H1 (cell line): ENCODE measurements at regions of chr1 and their contacts with region 1.

Region 1: GRCh38 chr1:156948708-156949107 is 28.3 kb downstream of the LRRC71 start:
- DNase-seq: no peak
- H3K4me3 ChIP-seq: no peak overlapping the region
- H3K27ac ChIP-seq: no peak overlapping the region
- H3K4me1 ChIP-seq: no peaks in the 10 kb centered on the region
- H3K27me3 ChIP-seq: no peaks in the 10 kb centered on the region
- CTCF ChIP-seq: peak; percentile 34 to 81 (median 80); a peak in 3 of 4 replicates
- EP300 ChIP-seq: no peak
- POLR2A ChIP-seq: no peak
- RAD21 ChIP-seq: peak; percentile 19 to 39; a peak in 2 of 4 replicates

Region 2: DNA sequence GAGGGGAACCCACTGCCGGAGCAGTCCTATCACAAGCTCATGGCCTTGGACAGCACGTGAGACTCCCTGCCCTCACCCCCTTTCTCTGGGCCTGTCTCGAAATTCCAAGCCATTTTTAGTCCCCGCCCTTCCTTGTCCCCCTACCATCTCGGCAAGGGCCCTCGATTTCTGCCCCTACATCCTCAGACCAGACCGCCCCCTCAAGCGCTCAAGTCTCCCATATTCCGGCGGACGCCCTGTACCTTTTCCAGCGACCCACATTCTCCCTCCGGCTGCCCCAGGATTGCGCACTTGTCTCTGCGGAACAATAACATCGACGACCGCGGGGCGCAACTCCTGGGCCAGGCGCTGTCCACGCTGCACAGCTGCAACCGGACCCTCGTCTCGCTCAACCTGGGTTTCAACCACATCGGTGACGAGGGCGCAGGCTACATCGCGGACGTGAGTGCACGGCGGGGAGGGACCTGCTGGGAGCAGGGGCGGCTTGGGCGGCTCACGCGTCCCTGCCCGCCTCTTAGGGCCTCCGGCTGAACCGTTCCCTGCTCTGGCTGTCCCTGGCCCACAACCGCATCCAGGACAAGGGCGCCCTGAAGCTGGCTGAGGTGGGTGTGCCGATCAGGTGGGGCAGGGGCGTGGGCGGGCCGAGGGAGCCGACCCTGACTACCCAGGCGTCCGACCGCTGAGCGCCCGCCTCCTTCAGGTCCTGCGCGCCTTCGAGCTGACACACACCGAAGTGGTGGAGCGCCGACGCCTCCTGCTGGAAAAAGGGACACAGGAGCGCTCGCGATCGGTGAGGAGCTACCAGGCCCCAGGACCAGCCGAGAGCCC is 21.3 kb before region 1 on chr1:
- CTCF ChIA-PET with region 1: interaction called, 25 read pairs
- POLR2A ChIA-PET with region 1: interaction called, 3 read pairs
- DNase-seq: peak in 1 of 2 experiments; percentile 90
- H3K4me3 ChIP-seq: peak overlapping the region; percentile 36 to 70 (median 62)
- H3K27ac ChIP-seq: no peak overlapping the region
- H3K4me1 ChIP-seq: peaks cover 3 to 21% (median 9%) of the 10 kb centered on the region in 4 experiments; a peak in 6 of 7 replicates
- H3K27me3 ChIP-seq: peaks cover 51 to 71% (median 69%) of the 10 kb centered on the region in 4 experiments
- CTCF ChIP-seq: peak; percentile 90 to 92 (median 92)
- EP300 ChIP-seq: no peak
- POLR2A ChIP-seq: no peak
- RAD21 ChIP-seq: peak; percentile 88 to 93

Region 3: GRCh38 chr1:156936721-156937220 is 11.9 kb before region 1 on chr1:
- CTCF ChIA-PET with region 1: interaction called, 25 read pairs
- POLR2A ChIA-PET with region 1: interaction called, 3 read pairs
- DNase-seq: no peak
- H3K4me3 ChIP-seq: no peak overlapping the region
- H3K27ac ChIP-seq: no peak overlapping the region
- H3K4me1 ChIP-seq: peaks cover 0 to 4% (median 0%) of the 10 kb centered on the region in 4 experiments; a peak in 3 of 7 replicates
- H3K27me3 ChIP-seq: no peaks in the 10 kb centered on the region
- CTCF ChIP-seq: no peak
- EP300 ChIP-seq: no peak
- POLR2A ChIP-seq: no peak
- RAD21 ChIP-seq: no peak

Region 4: GRCh38 chr1:156961709-156962108 is 13.0 kb after region 1 on chr1:
- CTCF ChIA-PET with region 1: interaction called, 31 read pairs
- POLR2A ChIA-PET with region 1: no interaction called
- DNase-seq: no peak
- H3K4me3 ChIP-seq: no peak overlapping the region
- H3K27ac ChIP-seq: no peak overlapping the region
- H3K4me1 ChIP-seq: no peaks in the 10 kb centered on the region
- H3K27me3 ChIP-seq: no peaks in the 10 kb centered on the region
- CTCF ChIP-seq: peak; percentile 13 to 75 (median 47)
- EP300 ChIP-seq: no peak
- POLR2A ChIP-seq: no peak
- RAD21 ChIP-seq: peak; percentile 31 to 49; a peak in 3 of 4 replicates

Region 5: DNA sequence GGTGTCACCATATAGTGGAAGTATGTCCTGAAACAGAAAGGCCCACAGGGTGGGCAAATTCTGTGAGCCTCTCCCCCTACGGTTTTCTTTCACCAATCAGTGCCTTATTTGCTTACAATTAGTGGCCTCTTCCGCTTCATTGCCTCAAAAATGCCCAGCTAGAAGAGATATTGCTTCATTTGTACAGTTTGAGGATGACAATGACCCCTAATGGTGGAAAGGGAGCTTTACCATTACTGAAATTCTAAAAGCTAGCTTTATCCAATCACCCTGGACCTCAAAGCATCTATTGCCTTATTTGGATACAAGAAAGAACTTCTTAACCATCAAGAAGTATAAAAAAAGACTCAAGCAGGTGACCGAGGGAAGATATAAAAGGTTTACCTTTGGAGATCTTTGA is 21.3 kb after region 1 on chr1:
- CTCF ChIA-PET with region 1: interaction called, 10 read pairs
- POLR2A ChIA-PET with region 1: interaction called, 3 read pairs
- DNase-seq: no peak
- H3K4me3 ChIP-seq: no peak overlapping the region
- H3K27ac ChIP-seq: no peak overlapping the region
- H3K4me1 ChIP-seq: peaks cover 0 to 3% (median 0%) of the 10 kb centered on the region in 4 experiments; a peak in 2 of 7 replicates
- H3K27me3 ChIP-seq: no peaks in the 10 kb centered on the region
- CTCF ChIP-seq: peak in 1 of 3 experiments; percentile 8; a peak in 1 of 4 replicates
- EP300 ChIP-seq: no peak
- POLR2A ChIP-seq: no peak
- RAD21 ChIP-seq: no peak

Region 6: DNA sequence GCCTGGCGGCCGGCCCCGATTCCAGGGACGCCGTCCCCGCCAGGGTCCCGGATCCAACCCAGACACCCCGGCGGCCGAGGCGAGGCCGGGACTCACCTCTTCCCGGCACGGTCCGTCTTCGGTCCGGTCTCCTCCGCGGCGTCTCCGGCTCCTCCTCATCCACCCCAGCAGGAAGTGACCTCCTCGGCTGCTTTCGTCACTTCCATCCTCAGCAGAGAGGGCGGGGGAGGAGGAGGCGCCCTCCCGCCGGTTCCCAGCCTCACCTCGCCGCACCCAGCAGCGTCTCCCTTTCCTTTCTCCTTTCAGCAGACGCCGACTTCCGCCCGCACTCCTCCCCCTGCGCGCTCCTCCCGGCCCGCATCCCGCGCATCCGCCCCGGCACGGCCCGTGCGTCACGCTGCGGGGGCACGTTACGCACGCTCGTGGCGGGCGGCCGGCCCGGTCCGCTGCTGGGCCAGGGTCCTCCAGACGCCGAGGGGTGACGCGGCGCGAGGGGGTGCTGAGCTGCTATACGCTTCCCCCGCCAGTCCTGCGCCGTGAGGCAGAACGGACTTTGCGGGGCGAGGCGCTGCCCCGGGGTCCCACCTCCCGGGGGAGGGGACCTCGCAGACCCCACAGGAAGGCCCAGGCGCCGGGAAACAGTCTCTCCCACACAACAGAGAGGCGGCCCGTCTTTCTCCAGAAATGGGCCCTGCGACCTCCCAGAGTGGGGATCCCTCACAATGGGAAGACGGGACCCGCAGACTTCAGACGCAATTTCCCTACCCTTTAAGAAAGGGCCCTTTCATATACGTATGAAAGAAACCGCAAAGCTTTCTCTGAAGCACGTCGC is 189.7 kb after region 1 on chr1 and contains the start of gene ETV3:
- CTCF ChIA-PET with region 1: no interaction called
- POLR2A ChIA-PET with region 1: no interaction called
- DNase-seq: peak; percentile 70 to 89
- H3K4me3 ChIP-seq: peak within 1 kb of the TSS; percentile 68 to 99 (median 94)
- H3K27ac ChIP-seq: peak within 1 kb of the TSS; percentile 87
- H3K4me1 ChIP-seq: peaks cover 2 to 17% (median 7%) of the 10 kb centered on the region in 4 experiments; a peak in 4 of 7 replicates
- H3K27me3 ChIP-seq: no peaks in the 10 kb centered on the region
- CTCF ChIP-seq: no peak
- EP300 ChIP-seq: peak in 1 of 2 experiments; percentile 24; a peak in 1 of 3 replicates
- POLR2A ChIP-seq: peak in 1 of 2 experiments; percentile 71; a peak in 1 of 3 replicates
- RAD21 ChIP-seq: no peak
- total RNA-seq, gene ETV3: 23.8 and 26.6 TPM in 2 replicates